Transverse colon (tissue), 4 donors: ENCODE measurements at regions of chr12 and their contacts with region 1.

Region 1: DNA sequence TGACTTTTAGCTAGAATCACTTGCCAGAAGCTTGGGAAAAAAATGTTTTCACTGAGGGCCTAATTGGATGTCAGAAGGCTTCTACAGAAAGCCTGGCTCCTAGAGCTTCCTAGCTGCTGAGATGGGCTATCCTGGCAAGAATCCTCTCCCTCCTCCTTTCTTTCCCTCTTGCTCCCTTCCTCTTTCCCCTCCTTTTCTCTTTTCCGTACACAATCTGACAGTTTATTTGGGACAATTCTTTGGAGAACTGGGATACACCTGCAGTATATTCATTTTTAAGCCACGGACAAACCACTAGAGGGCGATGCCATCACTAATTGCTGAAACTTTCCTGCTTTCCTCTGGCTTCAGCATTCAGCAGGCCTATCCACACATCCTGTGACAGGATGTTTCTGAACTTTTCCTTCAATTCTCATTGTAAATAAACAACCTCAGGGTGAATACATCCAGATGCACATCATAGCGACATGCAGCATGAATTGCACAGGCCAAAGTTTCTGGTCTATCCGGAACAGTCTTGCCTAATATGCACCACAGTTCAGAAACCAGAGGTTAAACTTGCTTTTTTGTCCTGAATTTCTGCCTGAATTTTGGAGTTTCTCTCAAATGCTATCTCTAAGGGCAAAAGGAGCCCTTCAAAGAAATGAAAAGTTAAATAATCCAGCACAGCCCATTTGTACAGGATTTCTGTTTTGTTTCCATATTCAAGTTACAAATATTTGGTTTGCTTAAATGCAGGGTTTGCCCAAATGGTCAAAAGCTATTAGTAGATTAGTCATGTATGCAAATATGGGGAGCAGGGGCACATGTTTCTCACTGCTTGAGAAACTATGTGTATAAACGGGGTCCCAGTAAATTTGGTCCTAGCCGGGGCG is 142.8 kb downstream of the PAWR start:
- DNase-seq: peak; percentile 43
- H3K4me3 ChIP-seq: no peak overlapping the region
- H3K27ac ChIP-seq: peak overlapping the region in 3 of 4 donors; percentile 11 to 68 (median 24)
- H3K4me1 ChIP-seq: peaks cover 0 to 14% (median 9%) of the 10 kb centered on the region in 4 donors
- H3K27me3 ChIP-seq: no peaks in the 10 kb centered on the region
- CTCF ChIP-seq: peak; percentile 62 to 83 (median 70)
- EP300 ChIP-seq: no peak
- POLR2A ChIP-seq: no peak

Region 2: GRCh38 chr12:79415746-79416435 is 132.1 kb before region 1 on chr12:
- in situ Hi-C with region 1: loop called in 3 of 4 experiments (anchors 10 to 25 kb)
- intact Hi-C with region 1: no loop called
- DNase-seq: peak; percentile 32
- H3K4me3 ChIP-seq: no peak overlapping the region
- H3K27ac ChIP-seq: peak overlapping the region; percentile 77 to 79 (median 78)
- H3K4me1 ChIP-seq: peaks cover 3 to 52% (median 41%) of the 10 kb centered on the region in 4 donors
- H3K27me3 ChIP-seq: no peaks in the 10 kb centered on the region
- CTCF ChIP-seq: no peak
- EP300 ChIP-seq: no peak
- POLR2A ChIP-seq: no peak